Astrocyte of the cerebellum (primary cell): ENCODE measurements at regions of chr5 and their contacts with region 1.

Region 1: GRCh38 chr5:107501965-107502675 is 168.6 kb downstream of the EFNA5 start:
- DNase-seq: no peak
- H3K4me3 ChIP-seq: no peak overlapping the region
- CTCF ChIP-seq: no peak

Region 2: GRCh38 chr5:107450116-107450515 is 52.0 kb before region 1 on chr5:
- in situ Hi-C with region 1: loop called (anchors 5 kb)
- DNase-seq: no peak
- H3K4me3 ChIP-seq: no peak overlapping the region
- CTCF ChIP-seq: no peak